Posterior vena cava (tissue), 2 donors: ENCODE measurements at regions of chr14 and their contacts with region 1.

Region 1: GRCh38 chr14:24978862-24979724 is 70.9 kb downstream of the STXBP6 start:
- DNase-seq: no peak

Region 2: DNA sequence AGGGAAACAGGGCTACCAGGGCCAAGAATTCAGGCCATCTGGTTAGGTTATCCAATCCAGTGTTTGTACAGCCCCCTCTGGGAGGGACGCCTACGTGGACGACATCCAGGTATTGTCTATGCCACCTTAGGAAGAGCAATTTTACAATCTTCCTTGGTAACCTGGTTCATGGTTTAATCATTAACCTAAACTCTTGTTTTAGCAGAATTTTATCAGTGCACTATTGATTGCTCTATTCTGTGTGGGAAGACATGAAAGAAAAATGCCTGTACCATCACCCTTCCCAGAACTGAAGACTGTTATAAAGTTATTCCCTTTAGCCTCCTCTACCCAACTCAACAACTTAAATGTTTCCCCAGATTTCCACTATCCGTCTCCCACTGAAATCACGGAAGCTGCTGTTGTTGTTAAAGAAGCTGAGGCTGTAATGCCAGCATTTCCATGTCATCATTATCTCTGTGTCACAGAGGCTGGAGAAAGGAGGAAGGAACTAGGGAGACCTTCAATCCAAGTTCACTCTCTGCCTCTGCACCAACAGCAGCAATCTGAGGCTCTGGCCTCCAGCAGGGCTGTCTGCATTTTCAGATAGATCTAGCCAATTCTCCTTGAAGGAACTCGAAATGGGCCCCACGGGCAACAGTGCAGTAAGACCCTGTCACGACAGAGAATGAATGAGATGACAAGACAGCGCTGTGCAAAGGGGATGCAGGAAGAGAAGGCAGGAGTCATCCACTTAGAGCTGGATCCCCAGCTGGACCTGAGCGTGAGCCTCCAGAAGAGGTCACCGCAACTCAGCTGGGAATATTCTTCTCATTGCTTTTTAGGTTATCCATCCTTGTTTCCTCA is 161.7 kb before region 1 on chr14:
- intact Hi-C with region 1: loop called in 1 of 2 experiments (anchors 10 kb)
- DNase-seq: no peak

Region 3: DNA sequence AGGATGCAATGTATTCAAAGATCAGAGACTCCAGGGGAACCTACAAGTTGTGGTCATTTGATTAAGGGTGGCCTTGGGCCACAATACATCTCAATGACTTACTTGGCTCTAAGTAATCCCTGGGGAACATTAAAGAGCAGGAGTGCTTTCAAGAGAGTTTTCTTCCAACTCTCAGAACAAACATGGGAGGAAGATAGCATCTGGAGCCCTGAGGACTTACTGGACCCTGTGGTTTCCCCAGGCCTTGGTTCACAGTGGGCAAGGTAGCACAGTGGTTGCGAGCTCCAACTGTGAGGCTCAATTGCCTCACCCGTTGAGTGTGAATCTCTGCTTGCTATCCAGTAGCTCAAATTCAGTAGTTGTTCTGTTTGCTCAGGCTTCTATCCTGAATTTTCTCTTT is 38.5 kb after region 1 on chr14:
- intact Hi-C with region 1: no loop called
- DNase-seq: no peak

Region 4: DNA sequence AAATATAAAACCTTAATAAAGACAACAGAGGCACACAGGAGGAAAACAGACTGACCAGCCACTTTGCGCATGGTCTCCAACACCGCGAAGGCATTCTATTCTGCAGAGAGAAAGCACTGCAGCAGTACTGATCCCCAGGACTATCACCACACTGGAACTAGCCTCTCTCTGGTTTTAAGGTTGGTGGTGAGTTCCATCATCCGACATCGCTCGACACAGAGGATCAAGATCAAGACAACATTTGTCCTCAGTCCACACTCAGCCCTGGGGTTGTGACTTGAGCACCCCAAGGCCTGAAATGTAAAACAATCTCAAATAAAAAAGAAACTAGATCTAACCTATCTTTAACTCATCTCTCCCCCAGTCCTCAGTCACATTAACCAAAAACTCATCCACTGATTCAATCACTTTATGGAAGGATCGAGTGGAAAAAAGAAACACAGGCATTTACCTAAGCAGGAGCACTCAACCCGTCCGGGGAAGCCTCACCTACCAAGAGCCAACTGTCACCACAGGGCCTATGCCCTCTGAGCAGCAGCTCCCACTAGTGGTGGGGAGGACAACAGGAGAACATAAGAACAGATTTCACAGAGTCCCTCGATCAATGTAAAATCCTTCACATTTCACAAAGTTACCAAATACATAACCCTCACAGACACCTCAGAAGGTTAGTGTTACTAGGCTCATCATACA is 53.1 kb after region 1 on chr14:
- intact Hi-C with region 1: no loop called
- DNase-seq: no peak